ENCODE measurements at regions of chr11 and their contacts with region 1.

Region 1: GRCh38 chr11:96342961-96343711 is at the start of gene MAML2:
- DNase-seq: peak; percentile 94
- ATAC-seq: peak; percentile 88
- H3K4me3 ChIP-seq: peak within 1 kb of the TSS; percentile 92
- H3K27ac ChIP-seq: peak within 1 kb of the TSS; percentile 94
- H3K4me1 ChIP-seq: peaks cover 9% of the 10 kb centered on the region
- H3K27me3 ChIP-seq: no peaks in the 10 kb centered on the region
- CTCF ChIP-seq: peak; percentile 99
- POLR2A ChIP-seq: peak; percentile 73
- RAD21 ChIP-seq: peak; percentile 95
- total RNA-seq, gene MAML2: 18.1 and 19.5 TPM in 2 replicates

Region 2: GRCh38 chr11:95790123-95790932 is 552.8 kb before region 1 on chr11 and contains the start of gene CEP57:
- CTCF ChIA-PET with region 1: interaction called, 3 read pairs
- POLR2A ChIA-PET with region 1: no interaction called
- dilution Hi-C with region 1: no loop called
- in situ Hi-C with region 1: no loop called
- intact Hi-C with region 1: loop called (anchors 2 kb)
- DNase-seq: peak; percentile 99
- ATAC-seq: peak; percentile 76
- H3K4me3 ChIP-seq: peak within 1 kb of the TSS; percentile 78
- H3K27ac ChIP-seq: peak within 1 kb of the TSS; percentile 85
- H3K4me1 ChIP-seq: no peaks in the 10 kb centered on the region
- H3K27me3 ChIP-seq: no peaks in the 10 kb centered on the region
- CTCF ChIP-seq: no peak
- POLR2A ChIP-seq: peak; percentile 58
- RAD21 ChIP-seq: no peak
- total RNA-seq, gene CEP57: 30.5 and 38.0 TPM in 2 replicates

Region 3: DNA sequence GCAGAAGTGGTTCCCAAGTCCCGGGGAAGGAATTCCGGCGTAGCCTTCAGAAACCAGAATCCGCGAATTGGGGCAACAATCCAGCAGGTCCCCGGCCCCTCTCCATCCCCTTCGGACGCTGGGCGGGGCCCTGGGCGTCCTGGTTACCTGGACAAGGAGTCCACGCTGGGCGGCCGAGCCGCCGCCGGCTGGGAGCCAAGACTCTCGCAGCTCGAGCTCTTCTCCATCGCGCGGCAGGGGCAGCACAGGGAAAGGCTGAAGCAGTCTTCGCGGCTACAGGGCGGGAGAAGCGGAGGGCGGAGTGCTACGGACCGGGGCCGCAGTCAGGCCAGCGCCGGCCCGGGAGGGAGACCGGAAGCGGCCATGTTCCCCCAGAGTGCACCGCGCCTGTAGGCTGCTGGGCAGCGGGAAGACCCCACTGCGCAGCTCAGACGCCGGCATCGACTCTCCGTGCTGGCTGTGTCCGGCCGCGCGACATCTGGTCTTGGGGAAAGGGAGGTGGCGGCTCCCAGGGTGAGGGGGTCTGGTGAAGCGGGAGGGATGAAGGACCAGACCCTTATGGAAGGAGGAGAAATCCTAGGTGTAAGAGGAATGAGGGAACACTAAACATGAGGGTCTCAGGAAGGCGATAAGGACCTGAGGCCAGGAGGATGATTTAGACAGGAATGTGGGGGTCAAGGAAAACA is 419.3 kb before region 1 on chr11 and contains the start of gene MTMR2:
- CTCF ChIA-PET with region 1: no interaction called
- POLR2A ChIA-PET with region 1: no interaction called
- dilution Hi-C with region 1: no loop called
- in situ Hi-C with region 1: no loop called
- intact Hi-C with region 1: loop called (anchors 1 kb)
- DNase-seq: peak; percentile 70
- ATAC-seq: peak; percentile 98
- H3K4me3 ChIP-seq: peak within 1 kb of the TSS; percentile 86
- H3K27ac ChIP-seq: peak within 1 kb of the TSS; percentile 99
- H3K4me1 ChIP-seq: 0 out of 2 replicates have a peak, but pooled peaks cover 1% of the 10 kb centered on the region
- H3K27me3 ChIP-seq: no peaks in the 10 kb centered on the region
- CTCF ChIP-seq: no peak
- POLR2A ChIP-seq: peak; percentile 96
- RAD21 ChIP-seq: no peak
- total RNA-seq, gene MTMR2: 30.6 and 36.9 TPM in 2 replicates

Region 4: GRCh38 chr11:96054870-96055705 is 288.0 kb before region 1 on chr11:
- CTCF ChIA-PET with region 1: interaction called, 27 read pairs
- POLR2A ChIA-PET with region 1: interaction called, 3 read pairs
- dilution Hi-C with region 1: no loop called
- in situ Hi-C with region 1: loop called (anchors 5 kb)
- intact Hi-C with region 1: loop called (anchors 1 kb)
- DNase-seq: peak; percentile 64
- ATAC-seq: no peak
- H3K4me3 ChIP-seq: no peak overlapping the region
- H3K27ac ChIP-seq: 0 out of 2 replicates have a peak overlapping the region, but pooled peaks have one; percentile 37
- H3K4me1 ChIP-seq: peaks cover 33% of the 10 kb centered on the region
- H3K27me3 ChIP-seq: no peaks in the 10 kb centered on the region
- CTCF ChIP-seq: peak; percentile 63
- POLR2A ChIP-seq: no peak
- RAD21 ChIP-seq: peak; percentile 64

Region 5: DNA sequence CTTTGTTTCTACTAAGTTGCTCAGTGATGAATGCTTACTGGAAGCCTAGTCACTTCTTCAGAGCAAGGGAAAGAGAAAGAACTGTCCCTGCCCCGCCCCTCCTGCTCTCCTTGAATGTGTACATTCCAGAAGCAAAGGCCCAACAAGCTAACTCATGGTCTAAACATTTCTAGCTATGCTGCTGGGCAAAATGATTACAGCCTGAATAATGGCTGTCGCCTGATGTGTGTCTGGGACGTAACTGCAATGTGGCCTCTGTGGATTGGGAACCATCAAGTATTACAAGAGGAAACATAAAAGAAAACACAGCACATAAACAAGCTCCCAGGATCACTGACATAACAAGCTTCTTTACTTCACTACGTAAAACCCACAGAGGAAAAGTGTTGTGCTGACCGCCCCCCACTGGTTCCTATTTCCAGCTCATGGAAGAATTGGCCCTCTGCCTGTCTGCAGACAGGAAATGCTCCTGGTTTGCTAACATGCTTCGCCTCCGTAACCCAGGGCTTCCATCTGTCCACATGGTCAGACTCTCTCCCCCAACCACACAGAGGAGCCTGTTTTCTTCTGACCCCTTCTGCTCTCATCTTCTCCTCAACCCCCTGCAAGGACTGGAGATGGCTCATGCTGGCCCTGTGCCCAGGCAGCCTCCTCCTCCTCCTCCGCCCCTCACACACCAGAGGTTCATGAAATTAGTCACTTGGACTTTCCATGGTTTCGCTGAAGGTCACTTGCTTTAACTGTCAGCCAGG is 187.3 kb before region 1 on chr11:
- CTCF ChIA-PET with region 1: interaction called, 16 read pairs
- POLR2A ChIA-PET with region 1: interaction called, 3 read pairs
- dilution Hi-C with region 1: no loop called
- in situ Hi-C with region 1: loop called (anchors 5 kb)
- intact Hi-C with region 1: no loop called
- DNase-seq: peak; percentile 97
- ATAC-seq: peak; percentile 79
- H3K4me3 ChIP-seq: peak overlapping the region; percentile 8; the same call in 1 of the 2 replicates
- H3K27ac ChIP-seq: peak overlapping the region; percentile 86
- H3K4me1 ChIP-seq: peaks cover 26% of the 10 kb centered on the region
- H3K27me3 ChIP-seq: no peaks in the 10 kb centered on the region
- CTCF ChIP-seq: peak; percentile 41
- POLR2A ChIP-seq: peak; percentile 43; the same call in 1 of the 2 replicates
- RAD21 ChIP-seq: peak; percentile 29

Region 6: DNA sequence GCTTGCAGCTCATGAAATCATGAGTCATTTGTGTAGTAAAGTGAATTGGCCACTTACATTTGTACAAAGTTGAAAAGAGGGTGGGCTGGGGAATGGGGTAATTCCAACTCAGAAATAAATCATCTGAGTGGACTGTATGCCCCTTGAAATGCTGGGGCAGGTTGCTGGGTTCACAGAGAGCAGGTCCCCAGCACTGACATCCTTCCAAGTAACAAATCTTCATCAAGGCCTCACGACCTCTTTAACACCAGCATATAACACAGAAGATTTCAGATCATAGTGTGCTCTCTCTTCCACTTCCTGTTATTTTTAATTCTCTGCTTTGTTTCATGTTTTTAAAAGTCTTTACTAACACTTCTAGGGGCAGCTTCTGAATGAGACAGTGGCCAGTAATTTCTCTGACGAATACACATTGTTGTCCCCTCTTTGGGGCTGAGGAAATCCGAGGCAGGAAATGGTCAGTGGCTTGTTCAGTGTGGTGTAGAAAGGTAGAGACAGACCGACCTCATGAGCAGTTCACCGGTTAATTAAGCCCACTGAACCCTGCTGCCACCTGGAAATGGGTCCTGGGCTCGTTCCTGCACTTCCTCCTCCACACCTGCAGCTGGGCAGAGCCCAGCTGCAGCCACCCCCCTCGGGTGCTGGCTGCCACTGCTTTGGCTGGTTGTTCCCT is 127.9 kb before region 1 on chr11:
- CTCF ChIA-PET with region 1: interaction called, 17 read pairs
- POLR2A ChIA-PET with region 1: interaction called, 3 read pairs
- dilution Hi-C with region 1: no loop called
- in situ Hi-C with region 1: no loop called
- intact Hi-C with region 1: no loop called
- DNase-seq: peak; percentile 76
- ATAC-seq: peak; percentile 55
- H3K4me3 ChIP-seq: no peak overlapping the region
- H3K27ac ChIP-seq: peak overlapping the region; percentile 88
- H3K4me1 ChIP-seq: peaks cover 39% of the 10 kb centered on the region
- H3K27me3 ChIP-seq: no peaks in the 10 kb centered on the region
- CTCF ChIP-seq: no peak
- POLR2A ChIP-seq: no peak
- RAD21 ChIP-seq: no peak

Region 7: DNA sequence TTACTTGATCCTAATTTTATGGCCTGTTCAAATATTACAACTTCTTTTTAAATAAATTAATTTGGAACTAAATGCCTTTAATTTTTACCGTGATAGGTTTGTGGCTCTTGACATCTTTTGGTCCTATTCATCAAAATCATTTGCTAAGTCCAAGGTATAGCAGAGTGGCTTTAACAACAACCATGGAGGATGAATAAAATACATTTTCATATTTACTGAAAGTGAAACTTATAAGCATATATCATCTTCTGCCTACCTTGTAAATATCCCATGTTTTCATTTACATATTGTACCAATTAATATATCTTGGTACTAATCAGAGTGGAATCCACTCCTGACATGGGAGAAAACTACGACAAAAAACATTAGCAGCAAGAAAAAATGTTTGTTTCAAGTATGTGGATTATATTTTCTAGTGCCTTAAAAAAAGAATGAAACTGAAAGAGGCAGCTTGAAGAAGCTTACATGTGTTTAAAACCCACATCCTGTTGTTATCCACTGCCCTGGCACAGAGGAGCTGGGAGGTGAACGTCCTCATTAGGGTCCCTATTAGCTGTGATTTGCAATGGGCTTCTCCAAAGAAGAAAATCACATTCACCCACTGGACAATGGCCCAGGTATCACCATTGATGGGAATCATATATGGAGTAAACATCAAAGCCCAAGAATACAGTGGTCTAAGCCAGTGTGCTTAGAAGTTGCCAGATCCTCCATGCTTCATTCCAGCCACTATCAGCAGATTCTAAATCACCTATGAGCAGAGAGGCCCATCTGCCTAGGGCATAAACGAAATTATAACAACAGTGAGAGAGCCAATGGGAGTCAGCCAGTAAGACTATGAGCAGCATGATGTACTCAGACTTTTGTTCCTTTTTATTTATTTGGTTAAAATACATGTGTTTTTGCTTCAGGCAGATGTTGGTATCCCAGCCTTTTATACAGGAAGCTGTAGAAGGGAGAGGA is 84.9 kb before region 1 on chr11:
- CTCF ChIA-PET with region 1: interaction called, 5 read pairs
- POLR2A ChIA-PET with region 1: interaction called, 3 read pairs
- dilution Hi-C with region 1: no loop called
- in situ Hi-C with region 1: no loop called
- intact Hi-C with region 1: loop called (anchors 5 kb)
- DNase-seq: peak; percentile 58
- ATAC-seq: peak; percentile 38
- H3K4me3 ChIP-seq: no peak overlapping the region
- H3K27ac ChIP-seq: peak overlapping the region; percentile 71; the same call in 1 of the 2 replicates
- H3K4me1 ChIP-seq: peaks cover 24% of the 10 kb centered on the region
- H3K27me3 ChIP-seq: no peaks in the 10 kb centered on the region
- CTCF ChIP-seq: no peak
- POLR2A ChIP-seq: no peak
- RAD21 ChIP-seq: no peak

Measured in IMR-90 (cell line).